GM13976 (cell line): ENCODE measurements at regions of chr14 and their contacts with region 1.

Region 1: GRCh38 chr14:37874429-37875191 is 279.2 kb downstream of the TTC6 start:
- DNase-seq: peak; percentile 52
- CTCF ChIP-seq: peak; percentile 90

Region 2: DNA sequence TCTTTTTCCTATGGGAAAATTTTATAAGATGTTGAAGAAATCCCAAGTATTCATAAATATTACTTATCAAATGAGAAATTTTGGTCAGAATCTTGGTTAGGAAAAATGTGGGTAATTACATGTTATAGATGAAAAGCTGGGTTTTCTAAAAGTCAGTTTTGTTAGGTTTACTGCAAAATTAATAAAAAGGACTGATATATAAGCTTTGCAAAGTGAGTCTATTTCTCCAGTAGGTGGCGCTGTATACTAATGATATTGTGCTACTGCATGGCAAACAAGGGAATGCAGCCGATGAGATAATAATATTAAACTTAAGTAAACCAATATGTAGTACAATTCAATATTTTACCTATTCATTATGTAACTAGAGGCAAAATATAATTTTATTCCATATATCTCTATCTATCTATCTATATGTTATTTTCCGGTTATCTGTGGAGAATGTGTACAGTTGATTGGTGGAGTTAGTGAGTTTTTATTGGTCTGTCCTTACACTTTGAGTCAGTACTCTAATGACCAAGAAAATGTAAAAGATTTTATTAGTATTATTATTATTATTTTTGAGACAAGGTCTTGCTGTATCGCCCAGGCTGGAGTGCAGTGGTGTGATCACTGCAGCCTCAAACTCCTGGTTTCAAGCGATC is 643.9 kb before region 1 on chr14:
- in situ Hi-C with region 1: loop called (anchors 25 kb)
- DNase-seq: peak; percentile 27
- CTCF ChIP-seq: peak; percentile 73